CD4-positive, alpha-beta T cell (primary cell): ENCODE measurements at regions of chr7 and their contacts with region 1.

Region 1: DNA sequence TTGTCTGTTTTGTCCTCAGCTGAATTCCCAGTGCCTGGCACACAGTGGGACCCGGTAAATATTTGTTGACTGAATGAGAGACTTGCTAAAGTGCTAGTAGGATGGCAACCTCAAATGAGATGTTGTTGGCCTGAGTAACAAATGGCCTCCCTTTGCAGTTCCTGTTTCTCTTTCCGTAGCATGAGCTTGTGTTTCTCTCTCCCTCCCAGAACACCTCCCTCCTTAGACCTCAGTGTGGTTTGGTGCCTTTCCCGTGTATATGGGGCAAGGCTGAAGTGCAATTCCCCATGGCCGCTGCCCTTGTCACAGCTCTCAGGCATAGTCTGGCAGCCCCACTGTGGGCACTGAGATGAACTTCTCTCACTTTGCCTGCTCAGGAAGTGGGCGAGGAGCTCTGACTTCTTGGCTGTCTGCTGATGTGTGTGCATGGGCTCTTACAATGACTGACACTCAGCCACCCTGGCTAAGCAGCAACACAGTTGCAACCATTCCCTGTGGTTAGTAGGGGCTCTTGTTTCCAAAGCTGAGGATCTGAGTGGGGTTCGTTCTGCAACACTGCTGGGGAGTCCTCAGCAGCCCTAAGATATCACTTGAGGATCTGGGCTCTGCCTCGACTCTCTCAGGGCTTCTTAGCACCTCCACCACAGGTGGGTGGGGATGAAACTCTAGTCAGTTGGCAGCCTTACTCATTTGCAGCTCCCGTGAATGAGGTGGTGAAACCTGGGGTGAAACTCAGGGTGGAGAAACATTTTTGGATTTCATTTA is 136.1 kb downstream of the ICA1 start:
- DNase-seq: peak; percentile 60 to 93 (median 76)
- ATAC-seq: peak; percentile 94
- H3K4me3 ChIP-seq: no peak overlapping the region
- H3K4me3 Mint-ChIP-seq: peak overlapping the region; percentile 56
- H3K27ac ChIP-seq: peak overlapping the region; percentile 74 to 83
- H3K27ac Mint-ChIP-seq: peak overlapping the region; percentile 96
- H3K4me1 ChIP-seq: peaks cover 83% of the 10 kb centered on the region
- H3K4me1 Mint-ChIP-seq: peaks cover 82% of the 10 kb centered on the region
- H3K27me3 ChIP-seq: no peaks in the 10 kb centered on the region
- H3K27me3 Mint-ChIP-seq: no peaks in the 10 kb centered on the region
- CTCF ChIP-seq: no peak

Region 2: GRCh38 chr7:7640221-7641128 is 485.4 kb before region 1 on chr7 and contains the start of gene UMAD1:
- CTCF ChIA-PET with region 1: no interaction called
- POLR2A ChIA-PET with region 1: interaction called, 22 read pairs
- intact Hi-C with region 1: loop called in 1 of 2 experiments (anchors 2 kb)
- DNase-seq: peak; percentile 94 to 100 (median 98)
- ATAC-seq: peak; percentile 83
- H3K4me3 ChIP-seq: peak within 1 kb of the TSS; percentile 88
- H3K4me3 Mint-ChIP-seq: peak within 1 kb of the TSS; percentile 90
- H3K27ac ChIP-seq: peak within 1 kb of the TSS; percentile 98 to 99
- H3K27ac Mint-ChIP-seq: peak within 1 kb of the TSS; percentile 98
- H3K4me1 ChIP-seq: peaks cover 17% of the 10 kb centered on the region
- H3K4me1 Mint-ChIP-seq: peaks cover 59% of the 10 kb centered on the region
- H3K27me3 ChIP-seq: no peaks in the 10 kb centered on the region
- H3K27me3 Mint-ChIP-seq: no peaks in the 10 kb centered on the region
- CTCF ChIP-seq: no peak
- total RNA-seq, gene UMAD1: 11.0 to 15.3 TPM

Region 3: DNA sequence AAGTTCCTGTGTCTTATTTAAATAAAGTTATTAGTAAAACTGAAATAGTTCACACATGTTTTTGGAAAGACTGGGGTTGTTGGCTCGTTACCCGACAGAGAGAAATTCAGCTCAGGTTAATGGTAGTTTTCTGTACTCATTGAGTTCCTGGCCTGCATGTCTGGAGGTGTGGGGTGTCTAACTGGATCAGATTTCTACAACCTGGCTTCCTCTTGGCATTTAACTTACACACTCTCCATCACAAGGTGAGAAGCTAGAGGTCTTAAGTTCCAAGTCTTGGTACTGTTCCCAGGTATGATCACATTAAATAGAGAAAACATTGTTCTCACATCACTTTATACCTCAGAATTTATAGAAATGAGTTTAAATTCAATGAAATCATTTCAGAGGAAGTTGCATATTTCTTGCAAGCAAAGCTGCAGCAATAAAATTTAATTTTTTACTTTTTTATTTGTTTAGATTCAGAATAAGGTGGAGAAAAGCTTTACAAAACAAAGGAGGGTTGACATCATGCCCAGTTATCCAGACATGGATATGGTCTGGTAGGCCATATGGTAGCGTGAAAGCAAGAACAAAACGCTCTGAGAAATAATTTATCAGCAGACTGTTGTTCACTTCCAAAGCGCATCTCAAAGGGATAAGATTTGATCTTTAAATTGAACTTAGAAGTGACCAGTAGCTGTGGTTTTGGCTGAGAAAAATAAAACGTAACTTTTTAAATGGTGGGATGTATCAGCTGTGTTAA is 36.7 kb before region 1 on chr7:
- CTCF ChIA-PET with region 1: interaction called, 3 read pairs
- POLR2A ChIA-PET with region 1: interaction called, 3 read pairs
- intact Hi-C with region 1: loop called in 1 of 2 experiments (anchors 2 kb)
- DNase-seq: no peak
- ATAC-seq: no peak
- H3K4me3 ChIP-seq: no peak overlapping the region
- H3K4me3 Mint-ChIP-seq: no peak overlapping the region
- H3K27ac ChIP-seq: no peak overlapping the region
- H3K27ac Mint-ChIP-seq: no peak overlapping the region
- H3K4me1 ChIP-seq: no peaks in the 10 kb centered on the region
- H3K4me1 Mint-ChIP-seq: peaks cover 15% of the 10 kb centered on the region
- H3K27me3 ChIP-seq: no peaks in the 10 kb centered on the region
- H3K27me3 Mint-ChIP-seq: no peaks in the 10 kb centered on the region
- CTCF ChIP-seq: no peak

Region 4: GRCh38 chr7:8115547-8116402 is 10.1 kb before region 1 on chr7:
- CTCF ChIA-PET with region 1: no interaction called
- POLR2A ChIA-PET with region 1: interaction called, 13 read pairs
- intact Hi-C with region 1: no loop called
- DNase-seq: peak in 1 of 14 experiments; percentile 54
- ATAC-seq: peak; percentile 64
- H3K4me3 ChIP-seq: no peak overlapping the region
- H3K4me3 Mint-ChIP-seq: peak overlapping the region; percentile 30
- H3K27ac ChIP-seq: peak overlapping the region; percentile 14 to 21
- H3K27ac Mint-ChIP-seq: peak overlapping the region; percentile 85
- H3K4me1 ChIP-seq: peaks cover 42% of the 10 kb centered on the region
- H3K4me1 Mint-ChIP-seq: peaks cover 77% of the 10 kb centered on the region
- H3K27me3 ChIP-seq: no peaks in the 10 kb centered on the region
- H3K27me3 Mint-ChIP-seq: no peaks in the 10 kb centered on the region
- CTCF ChIP-seq: no peak

Region 5: GRCh38 chr7:8176370-8177081 is 50.7 kb after region 1 on chr7:
- CTCF ChIA-PET with region 1: no interaction called
- POLR2A ChIA-PET with region 1: interaction called, 4 read pairs
- intact Hi-C with region 1: loop called in 1 of 2 experiments (anchors 1 kb)
- DNase-seq: peak; percentile 47 to 87 (median 64)
- ATAC-seq: peak; percentile 93
- H3K4me3 ChIP-seq: peak overlapping the region; percentile 22
- H3K4me3 Mint-ChIP-seq: peak overlapping the region; percentile 72
- H3K27ac ChIP-seq: peak overlapping the region; percentile 82 to 88
- H3K27ac Mint-ChIP-seq: peak overlapping the region; percentile 96
- H3K4me1 ChIP-seq: peaks cover 42% of the 10 kb centered on the region
- H3K4me1 Mint-ChIP-seq: peaks cover 60% of the 10 kb centered on the region
- H3K27me3 ChIP-seq: no peaks in the 10 kb centered on the region
- H3K27me3 Mint-ChIP-seq: no peaks in the 10 kb centered on the region
- CTCF ChIP-seq: no peak